WTC11 (cell line): ENCODE measurements at regions of chr7 and their contacts with region 1.

Region 1: DNA sequence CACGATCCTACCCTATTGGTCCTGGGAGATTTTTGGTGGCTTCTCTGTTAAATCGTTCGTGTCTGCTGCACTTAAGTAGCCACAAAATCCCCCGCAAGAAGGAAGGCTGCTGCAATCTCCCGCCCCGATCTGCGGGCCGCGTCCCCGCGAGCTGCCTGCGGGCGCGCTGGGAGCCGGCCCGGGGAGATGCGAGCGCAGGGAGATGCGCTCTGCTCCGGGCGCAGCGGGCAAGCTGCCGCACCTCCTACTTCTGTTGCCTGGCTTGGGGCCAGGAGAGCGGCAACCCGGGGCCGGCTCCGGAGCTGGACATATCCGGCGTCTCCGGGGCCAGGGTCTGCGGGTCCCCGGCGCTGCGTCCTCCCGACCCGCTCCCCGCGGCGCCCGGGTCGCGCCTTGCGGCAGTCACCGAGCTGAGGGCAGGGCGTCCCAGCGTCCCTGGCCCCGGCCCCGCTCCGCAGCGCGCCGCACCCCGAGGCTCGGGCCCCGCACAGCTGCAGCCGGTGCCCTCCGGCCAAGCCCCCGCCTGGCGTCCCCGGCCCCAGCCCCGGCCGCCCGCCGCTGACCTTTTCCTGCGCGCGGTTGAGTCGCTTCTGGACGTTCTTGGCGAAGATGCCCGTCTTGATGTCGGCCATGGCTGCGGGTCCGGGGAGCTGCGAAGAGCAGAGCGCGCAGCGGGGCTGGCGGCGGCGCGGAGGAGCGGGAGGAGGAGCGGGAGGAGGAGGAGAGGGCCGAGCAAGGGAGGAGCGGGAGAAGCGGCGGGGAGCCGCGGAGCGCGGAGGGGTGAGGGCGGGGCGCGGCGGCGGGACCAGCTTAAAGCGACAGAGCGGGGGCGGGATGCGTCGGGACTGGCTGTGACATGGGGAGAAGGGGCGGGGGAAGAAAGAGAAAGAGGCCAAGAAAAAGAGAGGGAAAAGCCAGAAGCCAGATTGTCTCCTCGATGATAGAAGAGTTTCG is at the start of gene AMPH:
- DNase-seq: peak; percentile 84
- ATAC-seq: peak; percentile 87
- H3K4me3 Mint-ChIP-seq: peak within 1 kb of the TSS; percentile 69
- H3K27ac Mint-ChIP-seq: no peak within 1 kb of the TSS
- H3K4me1 Mint-ChIP-seq: peaks cover 13% of the 10 kb centered on the region
- H3K27me3 Mint-ChIP-seq: peaks cover 51% of the 10 kb centered on the region
- CTCF ChIP-seq: no peak
- total RNA-seq, gene AMPH: 8.9 to 10.0 TPM (median 9.0 TPM) in 3 replicates

Region 2: GRCh38 chr7:38398725-38399321 is 232.2 kb before region 1 on chr7:
- CTCF ChIA-PET with region 1: interaction called, 15 read pairs
- POLR2A ChIA-PET with region 1: no interaction called
- DNase-seq: peak; percentile 45
- ATAC-seq: peak; percentile 72
- H3K4me3 Mint-ChIP-seq: no peak overlapping the region
- H3K27ac Mint-ChIP-seq: no peak overlapping the region
- H3K4me1 Mint-ChIP-seq: peaks cover 3% of the 10 kb centered on the region; the same call in 1 of the 2 replicates
- H3K27me3 Mint-ChIP-seq: no peaks in the 10 kb centered on the region; the same call in 1 of the 2 replicates
- CTCF ChIP-seq: peak; percentile 76

Region 3: GRCh38 chr7:38568497-38568896 is 62.5 kb before region 1 on chr7:
- CTCF ChIA-PET with region 1: no interaction called
- POLR2A ChIA-PET with region 1: no interaction called
- DNase-seq: no peak
- ATAC-seq: no peak
- H3K4me3 Mint-ChIP-seq: no peak overlapping the region
- H3K27ac Mint-ChIP-seq: no peak overlapping the region
- H3K4me1 Mint-ChIP-seq: no peaks in the 10 kb centered on the region
- H3K27me3 Mint-ChIP-seq: no peaks in the 10 kb centered on the region
- CTCF ChIP-seq: no peak

Region 4: DNA sequence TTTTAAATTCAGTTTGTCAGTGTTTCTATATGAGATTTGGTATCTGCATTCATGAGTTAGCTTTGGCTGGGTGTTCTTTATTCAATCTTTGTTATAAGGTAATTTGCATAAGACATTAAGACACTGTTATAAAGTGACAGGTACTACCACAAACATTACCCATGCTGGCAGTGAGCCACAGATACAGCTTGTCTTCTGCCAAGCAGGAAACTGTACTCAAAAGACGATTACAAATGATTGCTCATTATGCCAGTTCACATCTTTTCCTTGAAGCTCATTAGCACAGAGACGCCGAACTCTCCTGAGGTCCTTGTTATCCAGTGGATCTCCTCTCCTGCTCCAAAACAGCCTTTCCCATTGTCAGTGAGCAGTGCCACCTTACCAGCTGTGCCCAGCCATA is 30.3 kb before region 1 on chr7:
- CTCF ChIA-PET with region 1: no interaction called
- POLR2A ChIA-PET with region 1: no interaction called
- DNase-seq: no peak
- ATAC-seq: no peak
- H3K4me3 Mint-ChIP-seq: no peak overlapping the region
- H3K27ac Mint-ChIP-seq: no peak overlapping the region
- H3K4me1 Mint-ChIP-seq: no peaks in the 10 kb centered on the region
- H3K27me3 Mint-ChIP-seq: no peaks in the 10 kb centered on the region
- CTCF ChIP-seq: no peak